Calu3 (cell line): ENCODE measurements at regions of chr1 and their contacts with region 1.

Region 1: DNA sequence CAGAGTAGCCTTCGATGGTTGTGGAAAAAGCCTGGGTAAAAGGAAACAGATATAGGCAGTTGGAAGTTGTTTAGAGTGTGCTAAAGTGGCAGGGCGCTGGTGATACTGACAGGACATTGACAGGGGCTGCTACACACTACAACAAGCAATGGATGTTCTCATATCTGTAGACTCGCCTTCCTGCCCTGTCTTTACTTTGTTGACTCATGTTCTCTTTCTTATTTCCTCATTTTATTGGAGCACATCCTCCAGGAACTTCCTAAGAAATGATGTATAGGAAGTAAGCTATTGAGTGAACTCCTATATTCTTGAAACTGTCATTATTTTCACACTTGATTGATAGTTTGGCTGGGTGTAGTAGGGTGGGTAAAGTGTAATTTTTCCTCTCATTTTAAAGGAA is 51.0 kb downstream of the C4BPA start:
- DNase-seq: no peak
- H3K4me3 Mint-ChIP-seq: no peak overlapping the region
- H3K27ac Mint-ChIP-seq: no peak overlapping the region
- H3K4me1 Mint-ChIP-seq: no peaks in the 10 kb centered on the region
- H3K27me3 Mint-ChIP-seq: no peaks in the 10 kb centered on the region
- CTCF ChIP-seq: no peak

Region 2: DNA sequence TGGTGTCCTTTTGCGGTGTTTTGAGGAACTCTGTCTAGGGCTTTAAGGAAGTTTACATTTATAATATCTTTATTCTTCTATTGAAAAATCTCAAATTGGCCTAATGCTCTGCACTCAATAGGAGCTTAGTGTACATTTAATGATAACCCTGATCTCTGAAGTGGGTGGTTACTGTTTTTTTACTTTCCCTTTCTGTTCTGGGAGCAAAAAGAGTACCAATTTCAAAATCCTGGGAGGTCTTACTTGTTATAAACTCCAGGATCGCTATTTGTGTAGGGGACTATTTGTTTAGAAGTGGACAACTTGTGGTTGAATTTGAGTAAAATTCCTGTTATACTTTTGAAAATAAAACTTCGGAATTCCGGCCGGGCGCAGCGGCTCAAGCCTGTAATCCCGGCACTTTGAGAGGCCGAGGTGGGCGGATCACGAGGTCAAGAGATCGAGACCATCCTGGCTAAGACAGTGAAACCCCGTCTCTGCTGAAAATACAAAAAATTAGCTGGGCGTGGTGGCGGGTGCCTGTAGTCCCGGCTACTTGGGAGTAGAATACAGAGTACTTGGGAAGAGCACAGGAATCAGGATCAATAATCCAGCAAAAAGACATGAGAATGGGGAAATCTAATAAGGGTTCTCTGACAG is 65.3 kb before region 1 on chr1:
- CTCF ChIA-PET with region 1: interaction called, 3 read pairs
- intact Hi-C with region 1: loop called (anchors 5 kb)
- DNase-seq: no peak
- H3K4me3 Mint-ChIP-seq: peak overlapping the region; percentile 73
- H3K27ac Mint-ChIP-seq: peak overlapping the region; percentile 83
- H3K4me1 Mint-ChIP-seq: peaks cover 36% of the 10 kb centered on the region
- H3K27me3 Mint-ChIP-seq: no peaks in the 10 kb centered on the region
- CTCF ChIP-seq: no peak